Panc1 (cell line): ENCODE measurements at regions of chr2 and their contacts with region 1.

Region 1: DNA sequence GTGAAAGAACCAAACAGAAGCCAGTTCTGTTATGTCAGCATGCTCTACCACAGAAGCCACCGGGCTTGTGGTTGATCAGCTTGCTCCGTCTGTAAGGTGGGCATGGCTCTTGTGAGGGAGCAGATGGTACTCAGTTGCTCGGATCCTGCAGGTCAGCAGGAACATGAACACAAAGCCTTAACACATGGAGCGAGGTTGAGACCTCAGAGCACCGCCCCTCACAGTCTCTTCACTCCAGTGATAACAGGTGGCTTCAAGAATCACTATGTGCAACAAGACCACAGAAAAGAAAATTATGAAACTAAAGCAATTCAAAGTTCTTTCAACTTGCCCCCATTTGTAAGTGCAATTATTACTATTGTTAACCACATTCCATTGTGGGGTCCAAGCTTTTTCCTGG is 72.1 kb downstream of the OSBPL6 start:
- DNase-seq: no peak
- ATAC-seq: no peak
- H3K4me3 ChIP-seq: no peak overlapping the region
- H3K27ac ChIP-seq: no peak overlapping the region
- H3K4me1 ChIP-seq: no peaks in the 10 kb centered on the region
- H3K27me3 ChIP-seq: no peaks in the 10 kb centered on the region
- CTCF ChIP-seq: no peak

Region 2: GRCh38 chr2:178420463-178420999 is 154.1 kb after region 1 on chr2:
- CTCF ChIA-PET with region 1: interaction called, 10 read pairs
- POLR2A ChIA-PET with region 1: no interaction called
- in situ Hi-C with region 1: no loop called
- intact Hi-C with region 1: no loop called
- DNase-seq: no peak
- ATAC-seq: no peak
- H3K4me3 ChIP-seq: no peak overlapping the region
- H3K27ac ChIP-seq: no peak overlapping the region
- H3K4me1 ChIP-seq: no peaks in the 10 kb centered on the region
- H3K27me3 ChIP-seq: no peaks in the 10 kb centered on the region
- CTCF ChIP-seq: no peak